A673 (cell line): ENCODE measurements at regions of chr18 and their contacts with region 1.

Region 1: DNA sequence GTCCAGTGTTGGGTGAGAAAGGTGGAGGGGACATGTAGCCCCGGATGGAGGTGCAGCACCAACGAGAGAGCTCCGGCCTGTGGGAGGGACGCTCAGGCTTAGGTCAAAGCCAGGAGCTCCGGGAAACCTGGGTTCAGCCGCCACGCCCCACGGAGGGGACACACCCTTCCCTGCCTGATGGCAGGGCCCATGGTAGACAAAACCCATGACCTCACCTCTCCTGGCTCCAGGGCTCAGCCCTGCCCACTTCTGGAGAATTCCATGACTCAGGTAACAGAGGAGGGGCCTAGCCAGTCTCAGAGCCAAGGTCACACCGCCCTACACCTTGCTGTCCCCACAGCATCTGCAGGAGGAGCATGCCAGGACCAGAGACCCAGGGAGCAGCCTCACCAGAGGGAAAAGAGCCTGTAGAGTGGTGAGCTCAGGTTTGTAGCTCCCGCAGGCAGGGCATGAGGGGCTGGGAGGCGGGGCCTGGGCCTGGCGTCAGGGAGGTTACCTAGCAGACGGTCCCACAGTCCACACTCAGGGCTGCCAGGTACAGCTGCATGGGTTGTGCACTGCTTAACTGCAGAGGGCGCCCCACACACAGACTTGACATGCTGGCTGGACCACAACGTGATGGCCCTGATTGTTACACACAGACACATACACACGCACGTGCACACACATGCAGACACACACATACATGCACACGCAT is 70.8 kb upstream of the SMAD7 start:
- DNase-seq: peak; percentile 58
- H3K4me3 ChIP-seq: no peak overlapping the region
- H3K27ac ChIP-seq: no peak overlapping the region
- H3K4me1 ChIP-seq: no peaks in the 10 kb centered on the region
- H3K27me3 ChIP-seq: no peaks in the 10 kb centered on the region
- CTCF ChIP-seq: peak; percentile 69

Region 2: GRCh38 chr18:49082714-49083688 is 61.4 kb after region 1 on chr18:
- CTCF ChIA-PET with region 1: no interaction called
- POLR2A ChIA-PET with region 1: no interaction called
- intact Hi-C with region 1: no loop called
- DNase-seq: no peak
- H3K4me3 ChIP-seq: no peak overlapping the region
- H3K27ac ChIP-seq: no peak overlapping the region
- H3K4me1 ChIP-seq: no peaks in the 10 kb centered on the region
- H3K27me3 ChIP-seq: no peaks in the 10 kb centered on the region
- CTCF ChIP-seq: no peak

Region 3: GRCh38 chr18:49169037-49169521 is 147.5 kb after region 1 on chr18:
- CTCF ChIA-PET with region 1: no interaction called
- POLR2A ChIA-PET with region 1: no interaction called
- intact Hi-C with region 1: no loop called
- DNase-seq: no peak
- H3K4me3 ChIP-seq: no peak overlapping the region
- H3K27ac ChIP-seq: no peak overlapping the region
- H3K4me1 ChIP-seq: no peaks in the 10 kb centered on the region
- H3K27me3 ChIP-seq: no peaks in the 10 kb centered on the region
- CTCF ChIP-seq: no peak

Region 4: DNA sequence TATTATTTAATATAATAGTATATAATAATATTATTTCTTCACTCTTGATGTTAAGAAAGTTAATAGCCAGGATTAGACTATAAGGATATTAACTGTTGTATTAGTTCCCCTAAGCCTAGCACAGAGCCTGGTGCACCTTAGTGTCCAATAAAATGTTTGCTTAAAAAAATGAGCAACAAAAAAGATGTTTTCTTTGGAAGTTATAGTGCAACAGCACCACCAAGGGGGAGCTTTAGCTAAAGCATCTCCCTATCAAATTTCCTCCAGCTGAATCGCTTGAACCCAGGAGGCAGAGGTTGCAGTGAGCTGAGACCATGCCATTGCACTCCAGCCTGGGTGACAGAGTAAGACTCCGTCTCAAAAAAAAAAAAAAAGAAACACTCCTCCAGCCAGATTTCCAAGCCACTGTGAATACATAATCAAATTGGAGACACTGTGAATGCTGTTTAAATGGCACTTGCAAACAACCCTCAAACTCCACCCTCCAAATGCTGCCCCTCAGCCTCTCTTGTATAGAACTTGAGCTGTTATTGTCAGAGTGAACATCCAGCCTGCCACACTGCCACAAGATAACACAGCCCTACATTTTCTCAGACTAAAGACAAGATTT is 217.0 kb after region 1 on chr18:
- CTCF ChIA-PET with region 1: no interaction called
- POLR2A ChIA-PET with region 1: no interaction called
- intact Hi-C with region 1: loop called (anchors 2 kb)
- DNase-seq: peak; percentile 72
- H3K4me3 ChIP-seq: no peak overlapping the region
- H3K27ac ChIP-seq: no peak overlapping the region
- H3K4me1 ChIP-seq: no peaks in the 10 kb centered on the region
- H3K27me3 ChIP-seq: no peaks in the 10 kb centered on the region
- CTCF ChIP-seq: peak; percentile 63

Region 5: GRCh38 chr18:49510393-49511115 is 489.0 kb after region 1 on chr18:
- CTCF ChIA-PET with region 1: no interaction called
- POLR2A ChIA-PET with region 1: no interaction called
- intact Hi-C with region 1: no loop called
- DNase-seq: peak; percentile 74
- H3K4me3 ChIP-seq: no peak overlapping the region
- H3K27ac ChIP-seq: no peak overlapping the region
- H3K4me1 ChIP-seq: peaks cover 2% of the 10 kb centered on the region
- H3K27me3 ChIP-seq: no peaks in the 10 kb centered on the region
- CTCF ChIP-seq: peak; percentile 92

Region 6: GRCh38 chr18:49747876-49748275 is 726.3 kb after region 1 on chr18:
- CTCF ChIA-PET with region 1: no interaction called
- POLR2A ChIA-PET with region 1: no interaction called
- intact Hi-C with region 1: no loop called
- DNase-seq: peak; percentile 14
- H3K4me3 ChIP-seq: no peak overlapping the region
- H3K27ac ChIP-seq: no peak overlapping the region
- H3K4me1 ChIP-seq: peaks cover 7% of the 10 kb centered on the region
- H3K27me3 ChIP-seq: peaks cover 18% of the 10 kb centered on the region
- CTCF ChIP-seq: no peak